ENCODE measurements at regions of chr6 and their contacts with region 1.

Region 1: DNA sequence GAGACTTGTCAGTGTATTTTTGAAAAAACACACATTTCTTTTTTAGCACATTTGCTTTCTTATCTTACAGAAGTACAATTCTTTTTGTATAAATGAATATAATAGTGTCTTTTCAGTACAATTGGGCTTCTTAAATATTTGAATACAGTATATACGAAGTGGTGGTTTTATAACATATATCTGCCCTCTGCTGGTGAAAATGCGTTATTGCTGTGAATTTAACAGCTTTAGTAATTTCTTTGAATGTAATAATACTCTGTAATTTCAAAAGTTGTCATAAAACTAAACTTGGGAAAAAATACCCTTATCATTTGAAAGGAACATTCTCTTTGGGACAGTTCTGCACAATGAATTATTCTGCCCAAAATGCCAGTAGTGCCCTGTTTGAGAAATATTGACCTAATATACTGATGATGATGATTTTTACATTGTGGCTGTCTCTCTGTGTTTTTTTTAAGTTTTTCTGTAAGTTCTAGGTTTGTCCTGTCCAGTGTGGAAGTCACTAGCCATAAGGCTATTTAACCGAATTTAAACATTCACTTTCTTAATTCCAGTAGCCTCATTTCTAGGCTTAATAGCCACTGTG is 19.0 kb downstream of the SMAP1 start:
- DNase-seq: peak in 3 of 9 experiments; percentile 19 to 64 (median 54)
- ATAC-seq: peak; percentile 57
- H3K4me3 ChIP-seq: no peak overlapping the region
- H3K4me3 Mint-ChIP-seq: no peak overlapping the region
- H3K27ac ChIP-seq: no peak overlapping the region
- H3K27ac Mint-ChIP-seq: no peak overlapping the region
- H3K4me1 ChIP-seq: peaks cover 8% of the 10 kb centered on the region
- H3K4me1 Mint-ChIP-seq: peaks cover 58% of the 10 kb centered on the region
- H3K27me3 ChIP-seq: no peaks in the 10 kb centered on the region
- H3K27me3 Mint-ChIP-seq: no peaks in the 10 kb centered on the region
- CTCF ChIP-seq: peak; percentile 87

Region 2: GRCh38 chr6:70221025-70221714 is 465.5 kb before region 1 on chr6:
- CTCF ChIA-PET with region 1: no interaction called
- POLR2A ChIA-PET with region 1: no interaction called
- intact Hi-C with region 1: loop called (anchors 2 to 5 kb)
- DNase-seq: peak in 2 of 9 experiments; percentile 17 to 32
- ATAC-seq: peak; percentile 49
- H3K4me3 ChIP-seq: no peak overlapping the region
- H3K4me3 Mint-ChIP-seq: no peak overlapping the region
- H3K27ac ChIP-seq: no peak overlapping the region
- H3K27ac Mint-ChIP-seq: no peak overlapping the region
- H3K4me1 ChIP-seq: no peaks in the 10 kb centered on the region
- H3K4me1 Mint-ChIP-seq: no peaks in the 10 kb centered on the region
- H3K27me3 ChIP-seq: no peaks in the 10 kb centered on the region
- H3K27me3 Mint-ChIP-seq: peaks cover 18% of the 10 kb centered on the region
- CTCF ChIP-seq: peak; percentile 88

Region 3: GRCh38 chr6:70369332-70369950 is 317.2 kb before region 1 on chr6:
- CTCF ChIA-PET with region 1: interaction called, 7 read pairs
- POLR2A ChIA-PET with region 1: no interaction called
- intact Hi-C with region 1: loop called (anchors 1 to 5 kb)
- DNase-seq: peak; percentile 27 to 73 (median 59)
- ATAC-seq: peak; percentile 94
- H3K4me3 ChIP-seq: no peak overlapping the region
- H3K4me3 Mint-ChIP-seq: no peak overlapping the region
- H3K27ac ChIP-seq: no peak overlapping the region
- H3K27ac Mint-ChIP-seq: no peak overlapping the region
- H3K4me1 ChIP-seq: no peaks in the 10 kb centered on the region
- H3K4me1 Mint-ChIP-seq: no peaks in the 10 kb centered on the region
- H3K27me3 ChIP-seq: peaks cover 0 to 3% of the 10 kb centered on the region in 2 experiments
- H3K27me3 Mint-ChIP-seq: peaks cover 19% of the 10 kb centered on the region
- CTCF ChIP-seq: peak; percentile 79

Region 4: GRCh38 chr6:70520575-70520974 is 166.1 kb before region 1 on chr6:
- CTCF ChIA-PET with region 1: interaction called, 18 read pairs
- POLR2A ChIA-PET with region 1: no interaction called
- intact Hi-C with region 1: loop called (anchors 1 kb)
- DNase-seq: peak in 2 of 9 experiments; percentile 36 to 46
- ATAC-seq: no peak
- H3K4me3 ChIP-seq: no peak overlapping the region
- H3K4me3 Mint-ChIP-seq: no peak overlapping the region
- H3K27ac ChIP-seq: no peak overlapping the region
- H3K27ac Mint-ChIP-seq: no peak overlapping the region
- H3K4me1 ChIP-seq: no peaks in the 10 kb centered on the region
- H3K4me1 Mint-ChIP-seq: peaks cover 7% of the 10 kb centered on the region
- H3K27me3 ChIP-seq: no peaks in the 10 kb centered on the region
- H3K27me3 Mint-ChIP-seq: no peaks in the 10 kb centered on the region
- CTCF ChIP-seq: peak; percentile 38

Region 5: DNA sequence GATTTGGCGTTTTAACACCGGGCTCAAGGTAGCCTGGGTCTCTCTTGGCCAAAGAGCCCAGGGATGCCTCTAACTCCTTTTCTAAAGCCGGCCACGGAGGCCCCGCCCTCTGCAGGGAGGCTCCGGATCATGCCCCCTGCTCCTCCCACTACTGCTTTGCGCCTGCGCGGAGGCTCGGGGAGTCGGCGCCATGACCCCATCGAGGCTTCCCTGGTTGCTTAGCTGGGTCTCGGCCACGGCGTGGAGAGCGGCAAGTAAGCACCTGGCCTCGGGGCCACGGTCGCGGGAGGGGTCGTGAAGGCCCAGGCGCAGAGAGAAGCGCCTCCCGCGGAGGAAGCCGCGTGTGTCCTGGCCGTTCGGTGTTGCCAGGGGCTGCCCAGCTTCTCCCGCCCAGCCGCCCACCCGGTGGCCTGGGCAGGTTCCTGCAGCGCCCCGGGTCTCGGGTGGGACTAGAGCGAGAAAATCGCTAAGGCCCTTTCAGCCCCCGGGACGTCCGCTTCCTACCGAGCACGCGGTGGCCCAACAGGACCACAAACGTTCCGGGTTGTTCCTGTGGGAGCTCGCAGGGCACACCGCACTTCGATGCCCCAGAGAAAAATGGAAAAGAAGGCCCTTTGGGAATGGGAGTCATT is 119.8 kb before region 1 on chr6 and contains the start of gene SDHAF4:
- CTCF ChIA-PET with region 1: interaction called, 3 read pairs
- POLR2A ChIA-PET with region 1: no interaction called
- intact Hi-C with region 1: loop called in 1 of 2 experiments (anchors 5 kb)
- DNase-seq: peak; percentile 90 to 96 (median 95)
- ATAC-seq: peak; percentile 99
- H3K4me3 ChIP-seq: peak within 1 kb of the TSS; percentile 89 to 93
- H3K4me3 Mint-ChIP-seq: peak within 1 kb of the TSS; percentile 87
- H3K27ac ChIP-seq: peak within 1 kb of the TSS; percentile 61 to 82
- H3K27ac Mint-ChIP-seq: peak within 1 kb of the TSS; percentile 92
- H3K4me1 ChIP-seq: peaks cover 13% of the 10 kb centered on the region
- H3K4me1 Mint-ChIP-seq: peaks cover 24% of the 10 kb centered on the region
- H3K27me3 ChIP-seq: no peaks in the 10 kb centered on the region
- H3K27me3 Mint-ChIP-seq: no peaks in the 10 kb centered on the region
- CTCF ChIP-seq: no peak
- total RNA-seq, gene SDHAF4: 1.4 to 1.7 TPM

Measured in CD8-positive, alpha-beta T cell (primary cell).